Caco-2 (cell line): ENCODE measurements at regions of chr9 and their contacts with region 1.

Region 1: GRCh38 chr9:85610074-85610860 is 131.5 kb downstream of the AGTPBP1 start:
- DNase-seq: peak in 1 of 2 experiments; percentile 43
- H3K4me3 ChIP-seq: no peak overlapping the region
- H3K4me3 Mint-ChIP-seq: no peak overlapping the region
- H3K27ac Mint-ChIP-seq: no peak overlapping the region
- H3K4me1 ChIP-seq: no peaks in the 10 kb centered on the region
- H3K4me1 Mint-ChIP-seq: no peaks in the 10 kb centered on the region
- H3K27me3 ChIP-seq: no peaks in the 10 kb centered on the region
- H3K27me3 Mint-ChIP-seq: no peaks in the 10 kb centered on the region
- CTCF ChIP-seq: peak; percentile 50 to 59

Region 2: DNA sequence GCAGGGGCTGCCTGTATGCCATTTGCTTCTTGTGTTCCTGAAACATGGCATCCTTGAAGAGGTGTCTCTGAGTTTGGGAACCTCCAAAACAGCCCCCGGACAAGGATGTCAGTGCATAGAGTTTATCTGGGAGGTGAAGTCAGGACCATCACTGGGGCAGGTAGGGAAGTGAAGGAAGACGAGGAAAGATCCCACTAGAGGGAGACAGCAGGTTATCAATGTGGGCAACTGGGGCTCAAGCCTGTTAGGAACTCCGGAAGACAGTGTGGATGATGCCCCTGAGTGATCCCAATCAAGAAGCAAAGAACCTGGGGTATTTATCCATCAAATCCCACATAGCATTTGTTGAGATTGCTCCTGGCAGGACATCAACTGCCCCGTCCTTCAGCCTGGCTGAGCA is 101.7 kb before region 1 on chr9:
- CTCF ChIA-PET with region 1: interaction called, 5 read pairs
- POLR2A ChIA-PET with region 1: no interaction called
- intact Hi-C with region 1: loop called (anchors 1 kb)
- DNase-seq: no peak
- H3K4me3 ChIP-seq: no peak overlapping the region
- H3K4me3 Mint-ChIP-seq: no peak overlapping the region
- H3K27ac Mint-ChIP-seq: no peak overlapping the region
- H3K4me1 ChIP-seq: no peaks in the 10 kb centered on the region
- H3K4me1 Mint-ChIP-seq: no peaks in the 10 kb centered on the region
- H3K27me3 ChIP-seq: no peaks in the 10 kb centered on the region
- H3K27me3 Mint-ChIP-seq: peaks cover 4% of the 10 kb centered on the region
- CTCF ChIP-seq: peak in 1 of 2 experiments; percentile 13

Region 3: GRCh38 chr9:85630676-85631075 is 20.4 kb after region 1 on chr9:
- CTCF ChIA-PET with region 1: no interaction called
- POLR2A ChIA-PET with region 1: no interaction called
- intact Hi-C with region 1: no loop called
- DNase-seq: no peak
- H3K4me3 ChIP-seq: no peak overlapping the region
- H3K4me3 Mint-ChIP-seq: no peak overlapping the region
- H3K27ac Mint-ChIP-seq: no peak overlapping the region
- H3K4me1 ChIP-seq: no peaks in the 10 kb centered on the region
- H3K4me1 Mint-ChIP-seq: no peaks in the 10 kb centered on the region
- H3K27me3 ChIP-seq: no peaks in the 10 kb centered on the region
- H3K27me3 Mint-ChIP-seq: no peaks in the 10 kb centered on the region
- CTCF ChIP-seq: no peak